A549 (cell line): ENCODE measurements at regions of chr15 and their contacts with region 1.

Region 1: GRCh38 chr15:80495401-80495942 is 91.3 kb downstream of the ARNT2 start:
- DNase-seq: no peak
- ATAC-seq: peak in 1 of 2 experiments; percentile 49; a peak in 3 of 6 replicates
- H3K4me3 ChIP-seq: no peak overlapping the region
- H3K27ac ChIP-seq: peak overlapping the region; percentile 42 to 79; a peak in 5 of 6 replicates
- H3K4me1 ChIP-seq: peaks cover 32% of the 10 kb centered on the region
- CTCF ChIP-seq: no peak
- EP300 ChIP-seq: no peak
- POLR2A ChIP-seq: no peak
- RAD21 ChIP-seq: no peak

Region 2: GRCh38 chr15:80480909-80481308 is 14.6 kb before region 1 on chr15:
- CTCF ChIA-PET with region 1: interaction called, 10 read pairs
- POLR2A ChIA-PET with region 1: no interaction called
- DNase-seq: no peak
- ATAC-seq: peak; percentile 38 to 74; a peak in 3 of 6 replicates
- H3K4me3 ChIP-seq: no peak overlapping the region
- H3K27ac ChIP-seq: peak overlapping the region in 1 of 2 experiments; percentile 12; a peak in 1 of 6 replicates
- H3K4me1 ChIP-seq: peaks cover 15% of the 10 kb centered on the region; the same call in 2 of the 3 replicates
- CTCF ChIP-seq: no peak
- EP300 ChIP-seq: no peak
- POLR2A ChIP-seq: no peak
- RAD21 ChIP-seq: no peak